A673 (cell line): ENCODE measurements at regions of chr12 and their contacts with region 1.

Region 1: GRCh38 chr12:89893972-89894706 is 185.5 kb upstream of the ATP2B1 start:
- DNase-seq: no peak
- H3K4me3 ChIP-seq: no peak overlapping the region
- H3K27ac ChIP-seq: no peak overlapping the region
- H3K4me1 ChIP-seq: no peaks in the 10 kb centered on the region
- H3K27me3 ChIP-seq: no peaks in the 10 kb centered on the region
- CTCF ChIP-seq: no peak

Region 2: DNA sequence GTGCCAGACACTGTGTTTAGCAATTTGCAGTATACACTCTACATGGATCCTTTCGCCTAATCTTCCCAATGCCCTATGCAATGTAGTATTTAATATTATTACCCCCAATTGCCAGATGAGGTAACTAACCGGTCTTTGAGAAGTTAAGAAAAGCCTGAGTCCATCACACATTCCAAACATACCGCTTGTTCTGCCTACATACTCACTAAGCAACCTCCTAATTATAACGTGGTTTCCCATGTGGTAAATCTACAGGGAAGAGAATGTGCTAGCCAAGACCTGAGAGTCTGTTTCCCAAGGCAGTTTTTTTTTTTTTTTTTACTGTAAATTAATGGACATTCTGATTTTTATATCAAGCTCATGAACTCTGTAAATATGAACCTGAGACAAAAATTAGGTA is 222.7 kb before region 1 on chr12:
- CTCF ChIA-PET with region 1: no interaction called
- POLR2A ChIA-PET with region 1: no interaction called
- intact Hi-C with region 1: no loop called
- DNase-seq: peak; percentile 41
- H3K4me3 ChIP-seq: no peak overlapping the region
- H3K27ac ChIP-seq: no peak overlapping the region
- H3K4me1 ChIP-seq: peaks cover 11% of the 10 kb centered on the region
- H3K27me3 ChIP-seq: no peaks in the 10 kb centered on the region
- CTCF ChIP-seq: no peak

Region 3: DNA sequence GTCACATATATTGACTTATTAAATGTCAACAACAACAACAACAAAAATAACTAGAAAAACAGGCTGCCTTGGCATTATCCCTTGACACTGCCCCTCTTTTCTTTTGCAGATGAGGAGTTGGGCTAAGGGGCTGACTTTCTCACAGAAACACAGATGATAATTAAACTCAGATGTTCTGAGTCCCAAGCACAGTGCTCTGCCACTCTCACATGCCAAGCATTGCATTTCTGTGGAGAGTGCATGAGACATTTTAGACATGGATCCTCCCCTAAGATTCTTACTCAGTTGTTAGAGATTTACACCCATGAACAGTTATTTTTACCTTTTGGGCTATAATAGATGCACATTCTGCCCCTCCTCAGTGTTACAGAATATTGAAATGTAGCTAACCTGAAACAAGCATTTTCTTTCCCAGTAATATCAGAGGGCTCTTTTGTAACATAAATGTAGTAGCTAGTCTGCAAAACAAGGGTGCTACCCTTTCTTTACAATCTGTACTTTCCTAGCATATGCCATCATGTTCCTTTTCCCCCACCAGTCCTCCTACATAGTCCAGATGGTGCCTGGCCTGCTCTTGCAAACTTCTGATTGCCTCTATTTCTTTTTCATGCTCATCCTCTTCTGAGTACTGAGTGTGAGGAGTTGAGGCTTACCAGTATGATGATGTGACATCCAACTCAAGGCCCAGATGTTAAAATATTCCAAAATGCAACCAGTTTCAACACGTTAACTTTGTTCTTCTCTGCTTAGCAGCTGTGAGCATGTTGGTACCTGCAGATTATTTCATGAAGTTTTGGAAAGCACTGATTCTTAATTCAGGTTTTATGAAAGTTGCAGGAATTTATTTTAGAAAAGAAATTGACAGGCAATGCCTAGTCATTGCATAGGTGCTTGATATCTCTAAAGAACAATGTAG is 60.5 kb before region 1 on chr12:
- CTCF ChIA-PET with region 1: no interaction called
- POLR2A ChIA-PET with region 1: no interaction called
- intact Hi-C with region 1: no loop called
- DNase-seq: no peak
- H3K4me3 ChIP-seq: no peak overlapping the region
- H3K27ac ChIP-seq: no peak overlapping the region
- H3K4me1 ChIP-seq: peaks cover 7% of the 10 kb centered on the region
- H3K27me3 ChIP-seq: no peaks in the 10 kb centered on the region
- CTCF ChIP-seq: no peak

Region 4: DNA sequence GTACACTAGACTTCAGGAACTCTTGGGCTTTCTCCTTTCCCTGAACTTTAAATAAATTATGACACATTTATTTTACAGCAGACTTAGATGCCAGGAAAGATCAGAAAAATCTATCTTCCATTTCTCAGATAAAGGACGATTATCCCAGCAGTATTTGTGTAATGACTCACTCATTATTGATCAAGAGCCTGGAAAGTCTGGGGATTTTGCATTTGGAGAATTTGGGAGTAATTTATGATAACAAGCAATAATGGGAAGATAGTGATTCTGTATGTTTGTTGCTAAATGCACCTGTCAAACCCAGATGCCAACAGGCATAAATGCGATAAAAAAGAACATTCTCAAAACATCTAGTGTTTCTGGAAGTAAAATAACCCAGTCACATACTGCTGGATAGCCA is 294.7 kb after region 1 on chr12:
- CTCF ChIA-PET with region 1: no interaction called
- POLR2A ChIA-PET with region 1: interaction called, 18 read pairs
- intact Hi-C with region 1: no loop called
- DNase-seq: no peak
- H3K4me3 ChIP-seq: no peak overlapping the region
- H3K27ac ChIP-seq: no peak overlapping the region
- H3K4me1 ChIP-seq: no peaks in the 10 kb centered on the region
- H3K27me3 ChIP-seq: no peaks in the 10 kb centered on the region
- CTCF ChIP-seq: no peak

Region 5: DNA sequence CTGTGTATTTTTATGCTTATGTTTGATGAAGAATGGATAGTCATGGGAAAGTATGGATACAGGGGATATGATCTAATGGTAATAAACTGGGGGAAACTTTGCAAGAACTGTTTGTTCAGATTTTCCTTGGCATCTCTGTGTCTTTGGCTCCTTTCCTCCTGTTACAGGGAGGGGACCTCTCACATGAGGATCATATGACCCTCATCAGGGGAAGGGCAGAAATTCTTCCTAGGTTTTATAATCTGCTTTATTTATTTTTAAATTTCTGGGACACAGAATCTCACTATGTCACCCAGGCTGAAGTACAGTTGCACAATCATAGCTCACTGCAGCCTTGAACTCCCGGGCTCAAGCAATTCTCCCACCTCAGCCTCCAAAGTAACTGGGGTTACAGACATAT is 534.3 kb after region 1 on chr12:
- CTCF ChIA-PET with region 1: no interaction called
- POLR2A ChIA-PET with region 1: no interaction called
- intact Hi-C with region 1: no loop called
- DNase-seq: no peak
- H3K4me3 ChIP-seq: no peak overlapping the region
- H3K27ac ChIP-seq: no peak overlapping the region
- H3K4me1 ChIP-seq: no peaks in the 10 kb centered on the region
- H3K27me3 ChIP-seq: no peaks in the 10 kb centered on the region
- CTCF ChIP-seq: no peak

Region 6: GRCh38 chr12:91804533-91804932 is 1910.4 kb after region 1 on chr12:
- CTCF ChIA-PET with region 1: no interaction called
- POLR2A ChIA-PET with region 1: no interaction called
- intact Hi-C with region 1: no loop called
- DNase-seq: no peak
- H3K4me3 ChIP-seq: no peak overlapping the region
- H3K27ac ChIP-seq: no peak overlapping the region
- H3K4me1 ChIP-seq: no peaks in the 10 kb centered on the region
- H3K27me3 ChIP-seq: no peaks in the 10 kb centered on the region
- CTCF ChIP-seq: no peak